Activated CD4-positive, alpha-beta T cell treated with anti-CD3 and anti-CD28 coated beads for 36 hours (primary cell): ENCODE measurements at regions of chr18 and their contacts with region 1.

Region 1: DNA sequence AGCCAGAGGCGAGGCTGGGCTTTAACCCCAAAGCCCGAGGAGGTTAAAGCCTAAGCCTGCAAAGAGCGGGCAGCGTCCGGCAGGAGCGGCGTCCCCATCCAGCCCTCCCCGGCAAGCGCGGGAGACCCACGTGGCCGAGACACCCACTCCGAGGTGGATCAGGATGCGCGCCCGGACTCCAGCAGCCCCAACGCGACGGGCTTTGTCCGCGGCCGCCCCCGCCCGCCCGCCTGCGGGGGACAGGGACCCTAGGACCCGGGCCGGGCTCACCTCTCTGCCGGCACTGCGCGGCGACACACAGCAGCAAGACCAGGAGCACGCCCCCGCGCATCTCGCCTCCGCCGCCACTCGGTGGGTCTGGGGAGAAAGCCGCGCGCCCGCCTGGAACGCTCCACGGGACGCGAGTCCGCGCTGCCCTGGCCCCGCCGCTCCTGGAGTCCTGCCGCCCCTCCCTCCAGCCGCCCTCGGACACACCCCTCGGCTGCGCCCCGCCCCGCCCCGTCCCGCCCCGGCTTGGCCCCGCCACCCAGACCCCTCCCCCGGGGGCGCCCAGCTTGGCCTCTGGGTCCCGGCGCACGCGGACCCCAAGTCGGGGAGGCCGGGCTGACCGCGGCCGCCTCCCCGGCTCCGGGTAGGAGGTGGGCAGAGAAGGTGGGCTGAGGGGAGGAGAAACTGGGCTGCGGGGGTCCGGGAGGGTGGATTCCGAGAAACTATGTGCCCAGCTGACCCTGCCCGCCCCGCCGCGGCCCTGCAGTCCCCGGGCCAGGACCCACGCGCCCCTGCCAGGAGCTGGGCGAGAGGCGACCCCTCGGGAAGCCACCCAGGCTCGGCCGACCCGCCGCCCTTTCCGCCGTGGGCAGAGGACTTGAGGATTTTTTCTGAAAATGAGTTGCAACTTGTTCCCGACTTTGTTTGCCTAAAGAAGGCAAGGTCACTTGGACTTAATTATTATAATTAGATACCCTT is at the start of gene LAMA1:
- DNase-seq: peak; percentile 12
- ATAC-seq: no peak
- H3K4me3 Mint-ChIP-seq: peak within 1 kb of the TSS; percentile 44
- H3K27ac Mint-ChIP-seq: no peak within 1 kb of the TSS
- H3K4me1 Mint-ChIP-seq: peaks cover 8% of the 10 kb centered on the region
- H3K27me3 Mint-ChIP-seq: peaks cover 31% of the 10 kb centered on the region
- total RNA-seq, gene LAMA1: not detected

Region 2: DNA sequence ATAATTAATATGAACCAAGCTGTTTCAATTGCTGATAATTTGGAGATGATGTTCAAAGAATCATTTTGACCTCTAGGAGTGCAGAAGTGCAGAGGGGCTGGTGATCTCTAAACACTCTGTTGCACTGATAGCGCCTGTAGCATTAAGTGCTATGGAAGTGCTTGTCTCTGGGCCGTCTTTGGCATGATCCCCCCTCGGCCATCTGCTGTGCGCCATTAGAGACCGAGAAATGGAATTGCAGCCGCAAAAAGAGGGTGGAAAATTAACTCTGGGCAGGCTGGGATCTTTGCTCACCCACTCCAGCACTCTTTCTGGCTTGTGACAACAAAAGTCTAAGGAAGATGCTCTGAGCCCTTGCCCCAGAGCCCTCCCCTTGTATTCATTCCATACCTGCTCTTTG is 1944.0 kb before region 1 on chr18:
- CTCF ChIA-PET with region 1: no interaction called
- POLR2A ChIA-PET with region 1: no interaction called
- intact Hi-C with region 1: loop called in 1 of 2 experiments (anchors 5 kb)
- DNase-seq: no peak
- ATAC-seq: no peak
- H3K4me3 Mint-ChIP-seq: no peak overlapping the region
- H3K27ac Mint-ChIP-seq: no peak overlapping the region
- H3K4me1 Mint-ChIP-seq: peaks cover 10% of the 10 kb centered on the region
- H3K27me3 Mint-ChIP-seq: no peaks in the 10 kb centered on the region

Region 3: GRCh38 chr18:7066965-7067555 is 50.6 kb before region 1 on chr18:
- CTCF ChIA-PET with region 1: no interaction called
- POLR2A ChIA-PET with region 1: no interaction called
- intact Hi-C with region 1: loop called in 1 of 2 experiments (anchors 10 kb)
- DNase-seq: no peak
- ATAC-seq: no peak
- H3K4me3 Mint-ChIP-seq: no peak overlapping the region
- H3K27ac Mint-ChIP-seq: no peak overlapping the region
- H3K4me1 Mint-ChIP-seq: no peaks in the 10 kb centered on the region
- H3K27me3 Mint-ChIP-seq: no peaks in the 10 kb centered on the region

Region 4: GRCh38 chr18:7094432-7094831 is 23.2 kb before region 1 on chr18:
- CTCF ChIA-PET with region 1: no interaction called
- POLR2A ChIA-PET with region 1: no interaction called
- intact Hi-C with region 1: no loop called
- DNase-seq: no peak
- ATAC-seq: no peak
- H3K4me3 Mint-ChIP-seq: no peak overlapping the region
- H3K27ac Mint-ChIP-seq: no peak overlapping the region
- H3K4me1 Mint-ChIP-seq: no peaks in the 10 kb centered on the region
- H3K27me3 Mint-ChIP-seq: peaks cover 2% of the 10 kb centered on the region